Common myeloid progenitor, CD34-positive (primary cell): ENCODE measurements at regions of chr6 and their contacts with region 1.

Region 1: GRCh38 chr6:36027501-36028087 is at the start of gene MAPK14:
- DNase-seq: peak; percentile 100
- H3K4me3 ChIP-seq: peak within 1 kb of the TSS; percentile 99 to 100 (median 100)
- H3K27ac ChIP-seq: peak within 1 kb of the TSS; percentile 96 to 98
- H3K4me1 ChIP-seq: peaks cover 13 to 44% (median 33%) of the 10 kb centered on the region in 4 experiments
- H3K27me3 ChIP-seq: no peaks in the 10 kb centered on the region

Region 2: DNA sequence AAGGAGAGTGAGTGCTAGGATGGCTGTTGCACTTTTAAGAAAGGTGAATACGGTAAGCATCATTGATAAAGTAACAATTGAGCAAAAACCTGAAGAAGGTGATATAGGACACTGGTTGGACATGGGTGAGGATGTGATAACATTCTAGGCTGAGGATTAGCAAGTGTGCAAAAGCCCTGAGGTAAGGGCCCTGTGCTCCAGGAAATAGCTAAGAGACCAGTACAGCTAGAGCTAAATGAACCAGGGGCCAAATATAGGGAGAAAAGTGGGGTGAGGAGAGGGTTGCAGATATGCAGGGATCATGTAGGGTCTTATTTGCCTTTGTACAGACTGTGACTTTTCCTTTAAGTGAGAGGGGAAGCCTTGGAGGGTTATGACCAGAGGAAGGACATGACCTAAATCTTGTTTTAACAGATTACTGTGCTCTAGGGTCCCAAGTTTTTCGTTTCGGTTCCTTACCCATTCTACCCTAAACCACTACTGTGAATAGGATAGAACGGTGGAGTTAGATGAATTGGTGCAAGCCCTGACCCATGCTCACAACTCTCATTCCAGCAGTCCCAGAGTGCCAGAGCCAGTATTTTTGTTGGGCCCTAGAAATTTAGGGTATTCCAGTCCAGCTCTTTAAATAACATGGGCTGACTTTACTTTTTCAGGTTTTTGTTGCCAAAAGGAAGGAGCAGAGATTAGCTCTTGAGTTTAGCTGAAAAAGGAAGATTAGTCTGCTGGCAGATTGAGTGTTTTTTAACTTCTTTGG is 10.7 kb after region 1 on chr6:
- CTCF ChIA-PET with region 1: interaction called, 21 read pairs
- POLR2A ChIA-PET with region 1: interaction called, 27 read pairs
- DNase-seq: peak in 2 of 3 donors; percentile 67 to 72
- H3K4me3 ChIP-seq: peak overlapping the region in 5 of 7 experiments; percentile 13 to 52 (median 19)
- H3K27ac ChIP-seq: peak overlapping the region; percentile 67 to 84
- H3K4me1 ChIP-seq: peaks cover 34 to 77% (median 50%) of the 10 kb centered on the region in 4 experiments
- H3K27me3 ChIP-seq: no peaks in the 10 kb centered on the region

Region 3: DNA sequence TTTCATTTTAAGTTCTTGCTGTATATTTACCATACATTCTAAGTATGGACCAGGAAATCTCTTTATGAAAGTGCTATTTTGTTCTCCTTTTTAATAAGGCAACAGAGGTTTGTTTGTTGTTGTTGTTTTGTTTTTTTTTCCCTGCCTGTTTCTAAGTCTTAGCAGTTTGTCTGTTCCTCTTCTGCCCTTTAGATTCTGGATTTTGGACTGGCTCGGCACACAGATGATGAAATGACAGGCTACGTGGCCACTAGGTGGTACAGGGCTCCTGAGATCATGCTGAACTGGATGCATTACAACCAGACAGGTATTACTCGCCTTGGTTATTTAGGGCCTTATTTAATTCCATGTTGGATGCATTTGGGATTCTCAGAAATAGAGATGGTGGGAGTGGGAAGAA is 48.1 kb after region 1 on chr6:
- CTCF ChIA-PET with region 1: interaction called, 41 read pairs
- POLR2A ChIA-PET with region 1: interaction called, 5 read pairs
- DNase-seq: peak; percentile 52 to 65 (median 60)
- H3K4me3 ChIP-seq: no peak overlapping the region
- H3K27ac ChIP-seq: no peak overlapping the region
- H3K4me1 ChIP-seq: peaks cover 0 to 7% (median under 1%) of the 10 kb centered on the region in 4 experiments
- H3K27me3 ChIP-seq: no peaks in the 10 kb centered on the region

Region 4: DNA sequence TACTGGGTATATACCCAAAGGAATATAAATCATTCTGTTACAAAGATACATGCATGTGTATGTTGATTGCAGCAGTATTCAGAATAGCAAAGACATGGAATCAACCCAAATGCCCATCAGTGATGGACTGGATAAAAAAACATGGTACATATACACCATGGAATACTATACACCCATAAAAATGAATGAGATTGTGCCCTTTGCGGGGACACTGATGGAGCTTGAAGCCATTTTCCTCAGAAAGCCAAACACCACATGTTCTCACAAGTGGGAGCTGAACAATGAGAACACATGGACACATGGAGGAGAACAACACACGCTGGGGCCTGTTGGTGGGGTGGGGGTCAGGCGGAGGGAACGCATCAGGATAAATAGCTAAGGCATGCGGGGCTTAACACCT is 61.5 kb after region 1 on chr6:
- CTCF ChIA-PET with region 1: interaction called, 196 read pairs
- POLR2A ChIA-PET with region 1: interaction called, 29 read pairs
- DNase-seq: no peak
- H3K4me3 ChIP-seq: no peak overlapping the region
- H3K27ac ChIP-seq: no peak overlapping the region
- H3K4me1 ChIP-seq: no peaks in the 10 kb centered on the region
- H3K27me3 ChIP-seq: no peaks in the 10 kb centered on the region

Region 5: GRCh38 chr6:36104836-36105235 is 77.2 kb after region 1 on chr6:
- CTCF ChIA-PET with region 1: interaction called, 17 read pairs
- POLR2A ChIA-PET with region 1: interaction called, 3 read pairs
- DNase-seq: no peak
- H3K4me3 ChIP-seq: no peak overlapping the region
- H3K27ac ChIP-seq: no peak overlapping the region
- H3K4me1 ChIP-seq: peaks cover 4 to 15% (median 12%) of the 10 kb centered on the region in 4 experiments
- H3K27me3 ChIP-seq: no peaks in the 10 kb centered on the region